IMR-90 (cell line): ENCODE measurements at regions of chr2 and their contacts with region 1.

Region 1: GRCh38 chr2:54570925-54571694 is 115.0 kb downstream of the SPTBN1 start:
- DNase-seq: peak; percentile 97
- ATAC-seq: peak; percentile 79
- H3K4me3 ChIP-seq: no peak overlapping the region
- H3K27ac ChIP-seq: peak overlapping the region; percentile 16
- H3K4me1 ChIP-seq: peaks cover 35% of the 10 kb centered on the region
- H3K27me3 ChIP-seq: no peaks in the 10 kb centered on the region
- CTCF ChIP-seq: no peak
- POLR2A ChIP-seq: no peak; the same call in 1 of the 2 replicates
- RAD21 ChIP-seq: peak; percentile 31; the same call in 1 of the 2 replicates

Region 2: GRCh38 chr2:54176577-54176976 is 394.5 kb before region 1 on chr2:
- CTCF ChIA-PET with region 1: no interaction called
- POLR2A ChIA-PET with region 1: no interaction called
- dilution Hi-C with region 1: no loop called
- in situ Hi-C with region 1: no loop called
- intact Hi-C with region 1: loop called (anchors 1 kb)
- DNase-seq: peak; percentile 46
- ATAC-seq: peak; percentile 85
- H3K4me3 ChIP-seq: no peak overlapping the region
- H3K27ac ChIP-seq: no peak overlapping the region
- H3K4me1 ChIP-seq: no peaks in the 10 kb centered on the region
- H3K27me3 ChIP-seq: no peaks in the 10 kb centered on the region
- CTCF ChIP-seq: peak; percentile 61
- POLR2A ChIP-seq: no peak
- RAD21 ChIP-seq: peak; percentile 79

Region 3: DNA sequence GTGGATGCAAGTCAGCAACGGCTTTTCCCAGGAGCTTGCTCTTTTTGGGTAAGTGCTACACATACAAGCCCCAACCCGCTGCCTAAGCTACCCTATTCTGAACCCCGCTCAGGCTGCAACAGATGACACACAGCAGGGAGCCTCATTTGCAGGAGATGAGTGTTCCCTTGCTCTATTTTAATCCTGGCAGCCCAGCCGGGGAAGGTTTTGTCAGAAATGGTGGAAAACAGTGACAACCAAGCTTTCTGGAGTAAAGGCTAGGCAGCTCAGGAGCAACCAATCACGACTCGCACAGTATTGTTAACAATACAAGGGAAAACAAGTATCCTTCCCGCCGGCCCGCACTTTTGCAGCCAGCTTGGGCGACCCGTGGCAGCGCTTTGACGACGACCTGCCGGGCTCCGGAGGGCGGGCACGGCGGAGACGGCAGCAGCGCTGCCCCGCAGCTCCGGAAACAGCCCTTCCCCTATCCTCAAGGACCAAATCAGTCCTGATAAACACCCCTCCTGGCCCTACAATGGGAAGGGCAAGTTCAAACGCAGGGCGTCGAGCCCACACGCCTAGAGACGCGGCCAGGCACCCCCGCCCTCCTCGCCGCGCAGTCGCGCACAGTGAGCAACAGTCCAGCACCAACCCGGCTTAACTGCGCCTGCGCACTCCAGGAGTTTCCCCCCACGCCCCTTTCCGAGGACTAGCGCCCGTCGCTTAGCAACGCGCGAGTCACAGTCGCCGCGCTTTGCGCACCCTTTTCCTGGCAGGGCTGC is 240.8 kb before region 1 on chr2:
- CTCF ChIA-PET with region 1: no interaction called
- POLR2A ChIA-PET with region 1: no interaction called
- dilution Hi-C with region 1: no loop called
- in situ Hi-C with region 1: no loop called
- intact Hi-C with region 1: loop called (anchors 5 kb)
- DNase-seq: peak; percentile 92
- ATAC-seq: peak; percentile 99
- H3K4me3 ChIP-seq: peak overlapping the region; percentile 78
- H3K27ac ChIP-seq: peak overlapping the region; percentile 70
- H3K4me1 ChIP-seq: peaks cover 3% of the 10 kb centered on the region
- H3K27me3 ChIP-seq: no peaks in the 10 kb centered on the region
- CTCF ChIP-seq: no peak
- POLR2A ChIP-seq: peak; percentile 68
- RAD21 ChIP-seq: no peak

Region 4: DNA sequence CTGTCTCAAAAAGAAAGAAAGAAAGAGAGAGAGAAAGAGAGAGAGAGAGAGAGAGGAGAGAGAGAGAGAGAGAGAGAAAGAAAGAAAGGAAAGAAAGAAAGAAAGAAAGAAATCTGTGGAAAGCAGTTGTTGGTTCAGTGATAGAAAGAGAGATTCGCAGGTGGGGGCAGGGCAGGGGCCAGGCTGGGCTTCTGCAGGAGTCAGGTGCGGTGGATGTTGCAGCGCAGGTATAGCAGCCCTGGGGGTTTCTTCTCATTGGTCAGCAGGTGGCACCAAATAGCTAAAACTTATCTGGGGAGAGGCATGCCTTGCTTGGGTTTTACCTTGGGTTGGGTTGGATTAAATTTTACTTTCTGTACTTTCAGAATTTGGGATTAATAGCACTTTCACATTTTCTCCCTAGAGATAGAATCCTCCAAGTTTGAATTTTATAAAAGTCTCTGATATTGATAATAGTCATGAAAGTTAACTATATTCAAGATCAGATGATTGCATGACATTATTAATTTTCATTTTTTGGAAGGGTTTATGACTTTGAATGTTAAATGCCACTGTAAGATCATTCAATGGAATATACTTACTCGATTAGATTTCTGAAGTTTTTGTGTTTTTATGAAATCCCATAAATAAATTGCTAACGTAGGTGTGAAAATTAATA is 48.4 kb before region 1 on chr2:
- CTCF ChIA-PET with region 1: no interaction called
- POLR2A ChIA-PET with region 1: no interaction called
- dilution Hi-C with region 1: no loop called
- in situ Hi-C with region 1: no loop called
- intact Hi-C with region 1: no loop called
- DNase-seq: peak; percentile 59
- ATAC-seq: no peak
- H3K4me3 ChIP-seq: no peak overlapping the region
- H3K27ac ChIP-seq: no peak overlapping the region
- H3K4me1 ChIP-seq: peaks cover 12% of the 10 kb centered on the region
- H3K27me3 ChIP-seq: no peaks in the 10 kb centered on the region
- CTCF ChIP-seq: peak; percentile 61
- POLR2A ChIP-seq: no peak
- RAD21 ChIP-seq: peak; percentile 75

Region 5: DNA sequence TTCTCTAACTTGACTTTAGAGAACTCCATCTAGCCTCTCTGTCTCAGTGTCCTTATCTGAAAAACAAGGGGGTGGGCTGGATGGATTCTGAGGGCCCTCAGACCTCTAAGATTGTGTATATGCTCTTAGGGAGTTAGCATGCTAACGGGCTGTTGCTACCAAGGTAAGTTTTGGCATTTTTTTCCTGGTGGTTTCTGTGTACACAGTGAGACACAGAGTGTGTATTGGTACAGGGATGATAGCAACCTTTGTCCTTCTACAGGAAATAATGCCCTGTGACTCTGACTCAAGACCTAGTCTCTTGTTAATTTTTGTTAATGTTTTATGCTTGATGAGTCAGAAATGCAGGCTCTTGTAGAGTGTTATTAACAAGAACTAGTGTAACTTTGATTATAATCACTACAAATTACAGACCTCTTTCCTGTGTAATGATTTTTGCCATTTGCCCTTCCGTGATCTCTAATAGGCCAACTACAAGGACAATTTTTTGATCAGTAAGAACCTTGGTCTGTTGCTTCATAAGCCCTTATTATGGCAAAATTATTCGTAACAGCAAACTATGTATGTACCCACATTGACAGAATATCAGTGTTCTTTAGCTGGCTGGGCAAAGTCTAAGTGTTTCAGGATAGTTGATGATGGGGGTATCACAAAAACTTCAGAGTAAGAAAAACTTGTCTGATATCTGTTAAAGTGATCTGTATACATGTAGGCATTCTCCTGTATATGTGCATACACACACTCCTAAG is 25.2 kb before region 1 on chr2:
- CTCF ChIA-PET with region 1: no interaction called
- POLR2A ChIA-PET with region 1: no interaction called
- dilution Hi-C with region 1: no loop called
- in situ Hi-C with region 1: no loop called
- intact Hi-C with region 1: no loop called
- DNase-seq: peak; percentile 67
- ATAC-seq: peak; percentile 79
- H3K4me3 ChIP-seq: no peak overlapping the region
- H3K27ac ChIP-seq: peak overlapping the region; percentile 25; the same call in 1 of the 2 replicates
- H3K4me1 ChIP-seq: peaks cover 3% of the 10 kb centered on the region
- H3K27me3 ChIP-seq: no peaks in the 10 kb centered on the region
- CTCF ChIP-seq: no peak
- POLR2A ChIP-seq: no peak
- RAD21 ChIP-seq: no peak

Region 6: DNA sequence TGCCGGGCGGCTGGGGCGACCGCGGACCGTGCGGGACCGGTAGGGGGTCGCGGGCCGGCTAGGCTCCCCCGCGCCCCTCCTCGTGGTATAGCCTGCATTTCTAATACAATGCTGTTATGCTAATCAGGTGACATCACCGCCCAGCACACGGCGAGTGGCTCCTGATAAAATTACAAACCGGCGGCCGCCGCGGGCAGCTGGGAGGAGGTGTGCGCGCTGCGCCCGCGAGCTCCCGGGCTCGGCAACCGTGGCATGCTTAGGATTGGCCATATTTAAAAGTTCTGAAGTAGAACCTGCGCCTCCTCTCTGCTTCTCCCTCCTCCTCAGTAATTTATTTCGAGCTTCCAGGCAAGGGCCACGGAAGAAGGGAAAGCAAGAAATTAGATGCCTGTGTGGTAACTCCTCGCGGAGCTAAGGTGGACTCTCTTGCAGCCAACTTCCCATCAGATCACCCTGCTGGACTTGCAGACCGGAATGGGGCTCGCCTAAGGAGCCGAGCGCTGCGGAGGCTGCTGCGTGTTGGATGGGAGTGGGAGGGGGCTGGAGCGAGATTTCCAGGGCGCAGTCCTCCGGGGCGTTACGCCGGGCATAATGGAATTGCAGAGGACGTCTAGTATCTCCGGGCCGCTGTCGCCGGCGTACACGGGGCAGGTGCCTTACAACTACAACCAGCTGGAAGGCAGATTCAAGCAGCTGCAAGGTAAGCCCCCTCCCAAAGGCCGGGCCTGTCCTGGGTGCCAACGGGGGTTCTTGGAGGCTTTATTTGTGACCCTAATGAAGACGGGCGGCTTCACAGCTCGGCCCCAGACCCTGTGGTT is 12.7 kb before region 1 on chr2:
- CTCF ChIA-PET with region 1: interaction called, 3 read pairs
- POLR2A ChIA-PET with region 1: no interaction called
- dilution Hi-C with region 1: no loop called
- in situ Hi-C with region 1: no loop called
- intact Hi-C with region 1: loop called (anchors 1 kb)
- DNase-seq: peak; percentile 64
- ATAC-seq: peak; percentile 47
- H3K4me3 ChIP-seq: peak overlapping the region; percentile 54
- H3K27ac ChIP-seq: peak overlapping the region; percentile 3; the same call in 1 of the 2 replicates
- H3K4me1 ChIP-seq: peaks cover 21% of the 10 kb centered on the region
- H3K27me3 ChIP-seq: no peaks in the 10 kb centered on the region
- CTCF ChIP-seq: no peak
- POLR2A ChIP-seq: no peak
- RAD21 ChIP-seq: no peak